ENCODE measurements at regions of chr15 and their contacts with region 1.

Region 1: DNA sequence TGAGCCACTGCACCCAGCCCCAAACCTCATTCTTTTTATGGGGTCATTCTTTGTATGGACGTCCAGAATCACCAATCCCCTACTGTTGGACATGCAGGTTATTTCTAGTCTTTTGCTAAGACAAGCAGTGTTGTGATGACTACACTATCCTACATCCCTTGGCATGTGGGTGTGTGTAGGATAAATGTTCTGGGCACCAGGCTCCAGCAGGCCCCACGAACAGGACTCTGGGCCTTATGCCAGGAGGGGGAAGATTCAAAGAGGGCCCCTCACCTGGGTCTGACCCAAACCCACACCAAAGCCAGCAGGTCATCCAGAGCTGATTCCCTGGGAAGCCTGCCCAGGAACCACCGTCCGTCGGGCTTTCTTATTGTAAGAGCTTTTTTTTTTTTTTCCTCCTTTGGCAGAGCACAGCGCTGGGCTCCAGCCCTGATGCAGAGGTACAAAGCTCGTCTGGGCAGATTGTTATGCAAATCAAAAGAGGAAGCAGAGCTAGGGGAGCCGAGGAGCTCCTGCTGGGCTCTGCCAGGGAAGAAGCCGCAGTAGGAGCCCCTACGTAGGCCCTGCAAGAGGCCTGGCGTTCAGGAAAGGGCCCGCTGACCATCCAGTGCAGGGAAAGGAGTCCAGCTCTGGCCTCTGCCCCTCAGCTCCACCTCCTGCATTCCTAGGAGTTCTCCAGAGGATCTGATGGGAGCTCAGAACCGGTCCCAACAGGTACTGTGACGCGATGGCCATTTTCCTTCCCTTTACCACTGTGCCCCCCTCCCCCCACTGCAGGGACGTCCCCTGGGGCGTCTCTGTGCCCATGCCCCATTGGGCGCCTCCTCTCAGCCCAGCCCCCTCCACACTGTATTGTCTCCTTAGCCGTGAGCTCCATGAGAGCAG is 29.0 kb upstream of the FURIN start:
- DNase-seq: peak; percentile 74
- H3K4me3 Mint-ChIP-seq: peak overlapping the region; percentile 76
- H3K27ac Mint-ChIP-seq: peak overlapping the region; percentile 93
- H3K4me1 Mint-ChIP-seq: peaks cover 69% of the 10 kb centered on the region
- H3K27me3 Mint-ChIP-seq: no peaks in the 10 kb centered on the region

Region 2: DNA sequence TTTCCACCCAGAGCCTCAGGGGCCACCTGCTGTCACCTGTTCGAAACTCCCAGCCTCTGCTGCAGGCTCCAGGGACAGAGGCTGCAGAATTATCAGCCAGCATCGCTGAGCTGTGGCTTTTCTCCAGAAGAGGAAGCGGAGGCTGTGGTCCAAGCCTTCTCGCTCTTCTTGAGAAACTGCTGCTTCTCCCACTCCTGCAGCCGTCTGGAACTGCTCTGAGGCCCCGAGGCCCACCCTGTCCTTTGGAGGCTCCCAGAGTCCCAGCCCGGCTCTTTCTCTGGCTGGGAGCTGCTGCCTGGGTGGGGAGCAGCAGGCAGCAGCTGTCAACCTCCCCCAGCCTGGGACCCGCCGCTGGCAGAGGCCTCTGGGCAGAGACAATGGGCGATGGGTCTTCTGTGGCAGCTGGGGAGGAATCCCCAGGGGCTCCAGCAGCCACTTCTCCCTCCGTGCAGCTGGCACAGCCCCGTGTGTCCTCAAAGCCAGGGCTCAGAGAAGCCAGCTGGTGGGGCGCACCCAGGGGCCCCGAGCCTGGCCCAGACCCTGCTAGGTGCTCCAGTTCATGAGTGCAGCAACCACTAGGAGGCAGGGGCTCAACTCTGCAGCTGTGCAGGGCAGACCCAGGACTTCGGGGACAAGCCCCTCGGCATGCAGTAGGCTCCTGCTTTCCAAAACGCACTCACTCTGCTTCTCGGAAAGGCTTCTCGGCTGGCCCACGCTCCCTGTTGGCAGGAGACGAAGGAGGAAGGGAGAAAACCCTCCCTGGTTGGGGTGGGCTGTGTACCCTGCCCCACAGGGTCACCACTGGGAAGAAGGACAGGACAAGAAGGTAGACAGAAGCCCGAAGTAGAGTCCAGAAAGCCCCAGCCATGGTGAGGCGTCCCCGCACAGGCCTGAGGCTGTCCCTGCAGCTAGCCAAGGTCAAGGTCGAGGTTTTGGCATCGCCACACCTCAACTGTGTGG is 20.9 kb before region 1 on chr15:
- intact Hi-C with region 1: loop called (anchors 1 kb)
- DNase-seq: peak; percentile 86
- H3K4me3 Mint-ChIP-seq: peak overlapping the region; percentile 80
- H3K27ac Mint-ChIP-seq: peak overlapping the region; percentile 99
- H3K4me1 Mint-ChIP-seq: peaks cover 69% of the 10 kb centered on the region
- H3K27me3 Mint-ChIP-seq: no peaks in the 10 kb centered on the region

Region 3: DNA sequence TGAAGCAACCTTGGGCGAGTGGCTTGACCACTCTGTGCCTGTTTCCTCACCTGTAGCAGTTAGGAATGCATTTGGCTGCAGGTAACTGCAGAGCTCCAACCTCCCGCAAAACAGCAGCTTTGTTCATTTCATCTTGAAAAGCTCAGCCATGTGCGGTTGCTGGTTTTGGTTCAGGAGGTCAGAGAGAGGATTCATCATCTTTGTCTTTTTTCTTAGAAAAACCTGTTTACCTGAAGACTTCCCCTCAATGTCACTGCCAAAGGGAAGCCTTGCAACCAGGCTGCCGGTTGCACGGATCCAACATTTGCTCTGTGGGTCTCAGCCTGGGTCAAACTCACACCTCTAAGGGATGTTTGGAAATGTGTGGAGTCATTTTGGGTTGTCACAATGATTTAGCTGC is 12.5 kb after region 1 on chr15:
- intact Hi-C with region 1: loop called (anchors 1 kb)
- DNase-seq: peak; percentile 88
- H3K4me3 Mint-ChIP-seq: peak overlapping the region; percentile 72
- H3K27ac Mint-ChIP-seq: peak overlapping the region; percentile 94
- H3K4me1 Mint-ChIP-seq: peaks cover 64% of the 10 kb centered on the region
- H3K27me3 Mint-ChIP-seq: no peaks in the 10 kb centered on the region

Measured in activated CD4-positive, alpha-beta T cell treated with anti-CD3 and anti-CD28 coated beads, Interleukin-2, amount 10 ng/mL, durations not matched to agents 24 days and 14 days (primary cell).